ENCODE measurements at regions of chr9 and their contacts with region 1.

Region 1: GRCh38 chr9:120265791-120266190 is 314.2 kb downstream of the CDK5RAP2 start:
- DNase-seq: no peak
- ATAC-seq: no peak
- H3K4me3 ChIP-seq: no peak overlapping the region
- H3K27ac ChIP-seq: no peak overlapping the region
- H3K4me1 ChIP-seq: no peaks in the 10 kb centered on the region
- H3K27me3 ChIP-seq: no peaks in the 10 kb centered on the region; a peak in 1 of 5 replicates
- CTCF ChIP-seq: no peak
- EP300 ChIP-seq: no peak
- POLR2A ChIP-seq: no peak
- RAD21 ChIP-seq: no peak

Region 2: GRCh38 chr9:120562861-120563443 is 297.2 kb after region 1 on chr9:
- CTCF ChIA-PET with region 1: no interaction called
- POLR2A ChIA-PET with region 1: no interaction called
- in situ Hi-C with region 1: no loop called
- intact Hi-C with region 1: no loop called
- DNase-seq: peak in 3 of 4 experiments; percentile 15 to 38 (median 24)
- ATAC-seq: peak; percentile 66
- H3K4me3 ChIP-seq: no peak overlapping the region
- H3K27ac ChIP-seq: peak overlapping the region; percentile 40; the same call in 2 of the 3 replicates
- H3K4me1 ChIP-seq: peaks cover 4 to 17% of the 10 kb centered on the region in 2 experiments; a peak in 3 of 5 replicates
- H3K27me3 ChIP-seq: no peaks in the 10 kb centered on the region
- CTCF ChIP-seq: no peak
- EP300 ChIP-seq: no peak
- POLR2A ChIP-seq: no peak
- RAD21 ChIP-seq: no peak

Region 3: GRCh38 chr9:122228568-122229484 is 1963.0 kb after region 1 on chr9 and contains the start of gene LHX6:
- CTCF ChIA-PET with region 1: no interaction called
- POLR2A ChIA-PET with region 1: no interaction called
- in situ Hi-C with region 1: loop called (anchors 10 kb)
- intact Hi-C with region 1: no loop called
- DNase-seq: peak; percentile 59 to 82 (median 76)
- ATAC-seq: peak; percentile 74
- H3K4me3 ChIP-seq: peak within 1 kb of the TSS; percentile 49
- H3K27ac ChIP-seq: no peak within 1 kb of the TSS; the same call in 2 of the 3 replicates
- H3K4me1 ChIP-seq: peaks cover 9 to 30% of the 10 kb centered on the region in 2 experiments; a peak in 4 of 5 replicates
- H3K27me3 ChIP-seq: peaks cover 27 to 30% of the 10 kb centered on the region in 2 experiments
- CTCF ChIP-seq: no peak
- EP300 ChIP-seq: no peak
- POLR2A ChIP-seq: no peak
- RAD21 ChIP-seq: no peak
- polyA plus RNA-seq, gene LHX6: 2.8 to 3.4 TPM

Measured in K562 (cell line).